ENCODE measurements at regions of chr1 and their contacts with region 1.

Region 1: DNA sequence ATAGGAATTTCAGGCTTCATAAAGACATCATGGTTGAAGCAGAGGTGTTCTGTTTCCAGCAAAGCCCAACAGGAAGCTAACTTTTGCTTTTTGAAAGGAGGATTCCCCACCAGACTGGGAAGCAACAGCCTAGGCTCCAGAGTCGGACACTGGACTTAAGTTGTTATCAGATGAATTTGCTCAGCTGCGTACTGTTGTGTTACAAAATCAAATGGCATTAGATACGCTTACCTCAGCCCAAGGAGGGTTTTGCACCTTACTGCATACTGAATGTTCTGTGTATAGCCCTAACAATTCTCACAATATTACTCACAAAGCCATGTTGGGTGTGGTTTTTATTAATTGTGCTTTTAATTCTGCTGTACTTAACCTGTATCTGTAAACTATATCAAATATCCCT is 547 bp upstream of the CHIA start:
- DNase-seq: no peak
- H3K4me3 ChIP-seq: no peak overlapping the region
- H3K27ac ChIP-seq: no peak overlapping the region
- H3K4me1 ChIP-seq: no peaks in the 10 kb centered on the region
- H3K27me3 ChIP-seq: no peaks in the 10 kb centered on the region
- CTCF ChIP-seq: no peak
- EP300 ChIP-seq: no peak
- POLR2A ChIP-seq: no peak
- RAD21 ChIP-seq: no peak

Region 2: GRCh38 chr1:111270781-111271463 is 19.2 kb before region 1 on chr1:
- CTCF ChIA-PET with region 1: interaction called, 11 read pairs
- POLR2A ChIA-PET with region 1: no interaction called
- DNase-seq: peak in 1 of 2 experiments; percentile 72
- H3K4me3 ChIP-seq: peak overlapping the region; percentile 22 to 55 (median 34)
- H3K27ac ChIP-seq: no peak overlapping the region
- H3K4me1 ChIP-seq: peaks cover 0 to 13% (median 6%) of the 10 kb centered on the region in 4 experiments; a peak in 4 of 7 replicates
- H3K27me3 ChIP-seq: peaks cover 0 to 15% (median 7%) of the 10 kb centered on the region in 4 experiments; a peak in 4 of 7 replicates
- CTCF ChIP-seq: peak in 2 of 3 experiments; percentile 18 to 37; a peak in 3 of 4 replicates
- EP300 ChIP-seq: no peak
- POLR2A ChIP-seq: no peak
- RAD21 ChIP-seq: peak in 1 of 2 experiments; percentile 29; a peak in 1 of 4 replicates

Measured in H1 (cell line).